Activated B cell treated with CpG ODN at 0.5 μM for 24 hours (primary cell): ENCODE measurements at regions of chr2 and their contacts with region 1.

Region 1: DNA sequence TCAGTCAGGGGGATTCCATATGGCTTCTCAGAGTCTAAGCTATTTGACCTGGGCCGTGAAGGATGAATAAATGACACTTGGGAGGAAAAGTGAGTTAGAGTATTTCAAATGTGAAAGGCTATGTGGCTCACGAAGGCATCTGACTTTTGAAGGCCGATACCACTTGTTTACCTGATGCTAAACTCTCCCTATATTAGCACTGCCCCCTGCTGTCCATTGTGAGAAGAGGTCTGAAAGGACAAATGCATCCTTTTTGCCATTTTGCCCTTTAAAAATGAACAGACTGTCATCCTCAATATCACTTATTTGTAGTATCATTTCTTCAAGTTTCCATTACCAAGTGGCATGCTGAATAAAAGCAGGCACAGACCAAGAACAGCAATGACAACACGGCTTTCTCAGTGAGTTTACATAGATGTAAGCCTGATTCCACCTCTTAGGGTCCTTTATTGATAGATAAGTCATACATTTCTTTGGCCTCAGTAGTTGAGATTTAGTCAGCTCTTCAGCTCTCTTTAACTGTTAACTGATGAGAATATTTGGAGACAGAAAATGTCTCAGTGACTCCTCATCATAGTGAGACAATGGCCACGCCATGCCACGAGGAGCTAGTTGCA is 40.1 kb downstream of the DOCK10 start:
- DNase-seq: no peak
- ATAC-seq: peak; percentile 68
- H3K4me3 Mint-ChIP-seq: peak overlapping the region; percentile 53
- H3K27ac Mint-ChIP-seq: peak overlapping the region; percentile 79
- H3K4me1 Mint-ChIP-seq: peaks cover 34% of the 10 kb centered on the region
- H3K27me3 Mint-ChIP-seq: no peaks in the 10 kb centered on the region
- CTCF ChIP-seq: no peak

Region 2: GRCh38 chr2:224357098-224357901 is 644.8 kb before region 1 on chr2:
- CTCF ChIA-PET with region 1: no interaction called
- POLR2A ChIA-PET with region 1: no interaction called
- intact Hi-C with region 1: loop called (anchors 1 kb)
- DNase-seq: no peak
- ATAC-seq: peak; percentile 73
- H3K4me3 Mint-ChIP-seq: no peak overlapping the region
- H3K27ac Mint-ChIP-seq: no peak overlapping the region
- H3K4me1 Mint-ChIP-seq: no peaks in the 10 kb centered on the region
- H3K27me3 Mint-ChIP-seq: peaks cover 8% of the 10 kb centered on the region
- CTCF ChIP-seq: no peak

Region 3: GRCh38 chr2:224778474-224778877 is 223.7 kb before region 1 on chr2:
- CTCF ChIA-PET with region 1: no interaction called
- POLR2A ChIA-PET with region 1: no interaction called
- intact Hi-C with region 1: no loop called
- DNase-seq: no peak
- ATAC-seq: peak; percentile 69
- H3K4me3 Mint-ChIP-seq: no peak overlapping the region
- H3K27ac Mint-ChIP-seq: no peak overlapping the region
- H3K4me1 Mint-ChIP-seq: no peaks in the 10 kb centered on the region
- H3K27me3 Mint-ChIP-seq: no peaks in the 10 kb centered on the region
- CTCF ChIP-seq: peak; percentile 70

Region 4: DNA sequence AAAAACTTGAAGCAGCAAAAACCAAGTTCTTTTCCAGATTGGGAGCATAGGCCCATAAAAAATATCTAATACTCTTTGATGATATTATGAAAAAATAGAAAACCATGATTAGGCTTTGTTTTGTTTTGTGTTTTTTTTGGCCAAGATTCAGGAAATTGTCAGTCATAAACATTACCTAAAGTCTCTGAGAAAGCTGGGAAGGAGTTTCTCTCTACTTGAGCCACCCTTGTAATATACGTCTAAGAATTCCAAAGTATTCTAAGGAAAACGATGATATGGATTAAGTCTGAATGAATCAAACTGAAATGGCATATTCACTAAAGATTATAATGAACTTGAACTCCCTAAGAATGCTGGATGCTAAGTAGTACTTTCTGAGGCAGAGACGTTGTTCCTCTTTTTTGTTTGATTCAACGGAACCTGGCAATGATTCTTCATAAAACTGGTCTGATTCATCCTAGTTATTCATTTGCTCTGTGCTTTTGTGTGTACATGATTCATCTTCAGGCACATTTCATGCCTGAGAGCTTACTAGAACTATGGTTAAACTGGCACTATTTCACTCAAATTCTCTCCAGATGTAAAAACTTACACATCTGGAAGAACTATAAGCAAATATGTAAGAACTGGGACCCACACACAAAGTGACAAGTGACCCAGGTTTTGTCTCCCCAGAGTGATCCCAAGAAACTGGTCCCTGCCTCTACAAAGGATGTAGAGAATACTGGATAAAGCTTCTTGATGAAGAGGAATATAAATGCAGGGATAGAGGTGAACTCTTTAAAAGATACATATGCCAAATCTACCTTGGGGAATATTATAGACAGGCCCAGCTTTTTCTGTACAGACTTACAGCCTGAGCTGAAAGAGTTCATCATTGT is 119.6 kb before region 1 on chr2:
- CTCF ChIA-PET with region 1: interaction called, 5 read pairs
- POLR2A ChIA-PET with region 1: no interaction called
- intact Hi-C with region 1: loop called (anchors 1 kb)
- DNase-seq: no peak
- ATAC-seq: peak; percentile 77
- H3K4me3 Mint-ChIP-seq: peak overlapping the region; percentile 13
- H3K27ac Mint-ChIP-seq: peak overlapping the region; percentile 55
- H3K4me1 Mint-ChIP-seq: peaks cover 32% of the 10 kb centered on the region
- H3K27me3 Mint-ChIP-seq: no peaks in the 10 kb centered on the region
- CTCF ChIP-seq: no peak

Region 5: GRCh38 chr2:224938651-224939182 is 63.4 kb before region 1 on chr2:
- CTCF ChIA-PET with region 1: interaction called, 77 read pairs
- POLR2A ChIA-PET with region 1: no interaction called
- intact Hi-C with region 1: loop called (anchors 2 kb)
- DNase-seq: no peak
- ATAC-seq: peak; percentile 45
- H3K4me3 Mint-ChIP-seq: peak overlapping the region; percentile 65
- H3K27ac Mint-ChIP-seq: peak overlapping the region; percentile 82
- H3K4me1 Mint-ChIP-seq: peaks cover 82% of the 10 kb centered on the region
- H3K27me3 Mint-ChIP-seq: no peaks in the 10 kb centered on the region
- CTCF ChIP-seq: no peak

Region 6: DNA sequence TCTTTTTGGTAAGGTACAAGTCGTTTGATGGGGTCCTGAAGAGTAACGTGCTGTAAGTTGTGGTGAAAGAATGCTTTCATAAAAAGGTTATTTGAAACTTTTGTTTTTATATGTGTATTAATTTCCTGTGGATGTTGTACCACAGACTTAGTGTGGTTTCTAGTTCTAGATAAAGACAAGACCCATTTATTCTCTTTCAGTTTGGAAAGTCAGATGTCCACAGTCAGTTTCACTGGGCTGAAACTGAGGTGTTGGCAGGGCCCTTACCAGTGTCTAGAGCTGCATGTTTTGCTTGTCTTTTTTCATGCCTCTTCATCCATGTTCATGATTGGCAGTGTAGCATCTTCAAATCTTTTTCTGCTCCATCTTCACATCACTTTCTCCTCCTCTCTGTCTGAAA is 62.2 kb after region 1 on chr2:
- CTCF ChIA-PET with region 1: no interaction called
- POLR2A ChIA-PET with region 1: no interaction called
- intact Hi-C with region 1: no loop called
- DNase-seq: no peak
- ATAC-seq: no peak
- H3K4me3 Mint-ChIP-seq: no peak overlapping the region
- H3K27ac Mint-ChIP-seq: no peak overlapping the region
- H3K4me1 Mint-ChIP-seq: no peaks in the 10 kb centered on the region
- H3K27me3 Mint-ChIP-seq: peaks cover 4% of the 10 kb centered on the region
- CTCF ChIP-seq: no peak

Region 7: DNA sequence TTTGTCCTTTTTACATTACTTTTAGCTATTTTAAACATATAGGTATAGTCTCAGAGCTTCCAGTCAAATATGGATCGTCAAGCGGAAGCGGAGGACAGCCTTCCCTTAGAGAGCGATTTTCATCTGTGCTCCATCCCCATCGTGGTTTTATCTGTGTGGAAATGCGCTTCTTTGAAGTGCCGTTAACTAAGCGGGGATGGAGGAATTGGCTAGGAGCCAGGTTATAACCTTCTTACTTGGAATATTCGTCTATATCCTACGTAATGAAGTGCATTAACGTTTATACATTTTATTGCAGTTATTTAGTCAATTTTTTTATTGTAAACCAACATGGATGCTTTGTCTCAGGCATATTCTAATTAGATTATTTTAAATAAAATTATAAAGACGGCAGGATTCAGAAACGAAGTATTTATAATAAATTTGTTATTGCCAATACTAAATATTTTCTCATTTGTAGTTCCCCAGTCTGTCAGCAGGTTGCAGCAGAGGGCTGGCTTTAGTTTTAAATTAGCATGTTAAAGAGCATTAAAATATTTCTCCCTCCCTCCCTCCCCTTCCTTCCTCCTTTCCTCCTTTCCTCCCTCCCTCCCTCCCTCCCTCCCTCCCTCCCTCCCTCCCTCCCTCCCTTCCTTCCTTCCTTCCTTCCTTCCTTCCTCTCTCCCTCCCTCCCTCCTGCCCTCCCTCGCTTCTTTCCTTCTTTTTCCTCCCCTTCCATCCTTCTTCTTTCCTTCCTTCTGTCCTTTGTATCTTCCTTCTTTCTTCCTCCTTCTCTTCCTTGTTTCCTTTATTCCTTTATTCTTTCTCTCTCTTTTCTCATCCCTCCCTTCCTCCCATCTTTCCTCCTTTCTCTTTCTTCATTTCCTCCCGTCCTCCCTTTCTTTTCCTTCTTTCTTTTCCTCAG is 120.7 kb after region 1 on chr2:
- CTCF ChIA-PET with region 1: interaction called, 3 read pairs
- POLR2A ChIA-PET with region 1: no interaction called
- intact Hi-C with region 1: loop called (anchors 1 kb)
- DNase-seq: no peak
- ATAC-seq: no peak
- H3K4me3 Mint-ChIP-seq: no peak overlapping the region
- H3K27ac Mint-ChIP-seq: no peak overlapping the region
- H3K4me1 Mint-ChIP-seq: no peaks in the 10 kb centered on the region
- H3K27me3 Mint-ChIP-seq: peaks cover 6% of the 10 kb centered on the region
- CTCF ChIP-seq: no peak

Region 8: GRCh38 chr2:225660262-225661131 is 658.4 kb after region 1 on chr2:
- CTCF ChIA-PET with region 1: interaction called, 14 read pairs
- POLR2A ChIA-PET with region 1: no interaction called
- intact Hi-C with region 1: loop called (anchors 1 kb)
- DNase-seq: peak; percentile 52
- ATAC-seq: peak; percentile 65
- H3K4me3 Mint-ChIP-seq: no peak overlapping the region
- H3K27ac Mint-ChIP-seq: no peak overlapping the region
- H3K4me1 Mint-ChIP-seq: peaks cover 2% of the 10 kb centered on the region
- H3K27me3 Mint-ChIP-seq: peaks cover 22% of the 10 kb centered on the region
- CTCF ChIP-seq: peak; percentile 91

Region 9: DNA sequence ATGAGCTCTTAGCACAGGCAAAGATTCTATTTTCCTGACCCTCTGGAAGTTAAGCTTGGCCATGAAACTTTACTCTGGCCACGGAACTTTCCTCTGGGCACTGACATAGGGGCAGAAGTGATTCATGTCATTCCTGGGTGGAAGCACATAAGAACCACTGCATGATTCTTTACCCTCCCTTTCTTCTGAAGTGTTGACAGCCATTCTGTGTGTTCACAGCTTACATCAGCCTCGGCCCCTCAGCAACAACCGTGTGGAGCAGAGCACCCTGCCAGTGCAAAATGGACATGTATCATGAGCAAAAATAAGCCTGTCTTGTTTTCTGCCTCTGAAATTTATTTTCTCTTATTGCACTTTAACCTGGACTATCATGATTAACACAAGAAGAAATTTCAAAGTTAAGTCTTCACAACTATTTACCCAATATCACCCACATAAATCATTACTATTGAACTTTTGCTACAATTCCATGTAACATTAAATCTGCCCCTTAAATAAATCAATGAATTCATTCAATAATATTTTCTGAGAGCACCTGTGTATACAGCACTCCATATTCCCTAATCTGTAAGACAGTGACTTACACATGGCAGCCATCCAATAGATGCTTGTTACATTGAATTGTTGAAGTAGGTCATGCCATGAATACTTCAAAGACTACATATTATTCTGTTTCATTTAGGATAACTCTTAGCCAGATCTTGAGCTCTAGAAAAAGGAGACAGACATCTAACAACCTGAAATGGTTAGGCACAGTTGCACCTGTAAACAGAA is 1265.6 kb after region 1 on chr2:
- CTCF ChIA-PET with region 1: no interaction called
- POLR2A ChIA-PET with region 1: no interaction called
- intact Hi-C with region 1: no loop called
- DNase-seq: no peak
- ATAC-seq: no peak
- H3K4me3 Mint-ChIP-seq: no peak overlapping the region
- H3K27ac Mint-ChIP-seq: no peak overlapping the region
- H3K4me1 Mint-ChIP-seq: peaks cover 4% of the 10 kb centered on the region
- H3K27me3 Mint-ChIP-seq: peaks cover 2% of the 10 kb centered on the region
- CTCF ChIP-seq: no peak